ENCODE measurements at regions of chr5 and their contacts with region 1.

Region 1: GRCh38 chr5:142888469-142889085 is 118.4 kb downstream of the ARHGAP26 start:
- DNase-seq: peak; percentile 67

Region 2: DNA sequence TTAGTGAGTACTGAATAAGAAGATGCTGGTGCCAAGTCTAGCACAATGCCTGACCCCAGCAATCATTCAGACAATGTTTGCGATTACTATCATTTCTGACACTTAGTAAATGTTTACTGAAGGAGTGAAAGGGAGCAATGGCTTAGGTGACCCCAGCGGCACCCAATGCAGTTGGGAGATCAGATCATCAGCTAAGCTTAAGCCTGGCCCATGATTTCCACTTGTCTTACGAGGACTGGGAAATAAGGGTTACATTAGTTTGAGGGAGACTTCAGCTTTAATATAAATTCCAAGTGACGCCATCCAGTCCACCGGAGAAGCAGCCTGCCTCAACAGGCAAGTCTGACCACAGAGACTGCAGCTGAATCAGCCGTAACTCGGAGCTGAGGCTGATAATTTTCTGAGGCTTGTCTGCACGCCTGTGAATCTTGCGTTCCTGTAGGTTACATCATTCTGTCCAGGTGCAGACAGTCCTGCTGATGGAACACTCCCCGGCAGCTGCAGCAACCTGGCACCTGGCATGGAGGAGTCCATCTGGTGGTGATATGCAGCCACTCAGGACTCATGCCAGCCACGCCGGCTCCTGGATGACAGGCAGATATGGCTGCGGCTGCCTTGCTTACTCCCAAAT is 167.8 kb before region 1 on chr5:
- CTCF ChIA-PET with region 1: interaction called, 68 read pairs
- POLR2A ChIA-PET with region 1: no interaction called
- DNase-seq: no peak

Region 3: GRCh38 chr5:142726188-142726731 is 162.3 kb before region 1 on chr5:
- CTCF ChIA-PET with region 1: interaction called, 19 read pairs
- POLR2A ChIA-PET with region 1: no interaction called
- DNase-seq: no peak

Region 4: GRCh38 chr5:142841511-142842265 is 46.9 kb before region 1 on chr5:
- CTCF ChIA-PET with region 1: no interaction called
- POLR2A ChIA-PET with region 1: no interaction called
- DNase-seq: no peak